ENCODE measurements at regions of chr12 and their contacts with region 1.

Region 1: GRCh38 chr12:78146365-78146772 is 315.7 kb downstream of the NAV3 start:
- DNase-seq: no peak
- ATAC-seq: peak; percentile 69
- H3K4me3 ChIP-seq: no peak overlapping the region
- H3K27ac ChIP-seq: no peak overlapping the region
- H3K4me1 ChIP-seq: no peaks in the 10 kb centered on the region
- H3K27me3 ChIP-seq: no peaks in the 10 kb centered on the region
- CTCF ChIP-seq: peak; percentile 56 to 63 (median 58)
- EP300 ChIP-seq: no peak
- POLR2A ChIP-seq: no peak
- RAD21 ChIP-seq: peak; percentile 66

Region 2: DNA sequence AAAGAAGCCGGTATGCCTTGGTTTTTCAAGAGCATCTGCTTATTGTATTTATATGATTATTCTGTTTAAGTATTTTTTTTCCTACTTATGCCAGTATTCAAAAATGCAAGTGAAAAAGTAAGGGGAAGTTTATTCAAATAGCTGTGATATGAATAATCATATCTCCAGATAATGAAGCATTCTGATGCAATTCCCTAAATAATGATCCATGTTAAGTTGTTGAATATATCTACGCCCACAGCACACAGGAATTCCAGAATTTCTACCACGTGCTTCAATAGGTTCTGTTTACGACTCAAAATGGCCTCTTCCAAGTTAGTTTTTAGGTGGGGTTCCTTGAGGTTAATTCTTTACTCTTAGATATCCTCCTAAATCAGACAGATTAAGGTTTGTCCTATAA is 107.4 kb before region 1 on chr12:
- CTCF ChIA-PET with region 1: no interaction called
- POLR2A ChIA-PET with region 1: no interaction called
- RAD21 ChIA-PET with region 1: no interaction called
- SMC1A ChIA-PET with region 1: no interaction called
- in situ Hi-C with region 1: no loop called
- intact Hi-C with region 1: no loop called
- DNase-seq: no peak
- ATAC-seq: no peak
- H3K4me3 ChIP-seq: no peak overlapping the region
- H3K27ac ChIP-seq: no peak overlapping the region
- H3K4me1 ChIP-seq: no peaks in the 10 kb centered on the region
- H3K27me3 ChIP-seq: no peaks in the 10 kb centered on the region; a peak in 1 of 4 replicates
- CTCF ChIP-seq: no peak
- EP300 ChIP-seq: no peak
- POLR2A ChIP-seq: no peak
- RAD21 ChIP-seq: no peak

Region 3: GRCh38 chr12:78050790-78051189 is 95.6 kb before region 1 on chr12:
- CTCF ChIA-PET with region 1: no interaction called
- POLR2A ChIA-PET with region 1: no interaction called
- RAD21 ChIA-PET with region 1: no interaction called
- SMC1A ChIA-PET with region 1: no interaction called
- in situ Hi-C with region 1: no loop called
- intact Hi-C with region 1: no loop called
- DNase-seq: no peak
- ATAC-seq: no peak
- H3K4me3 ChIP-seq: no peak overlapping the region
- H3K27ac ChIP-seq: no peak overlapping the region
- H3K4me1 ChIP-seq: no peaks in the 10 kb centered on the region
- H3K27me3 ChIP-seq: no peaks in the 10 kb centered on the region
- CTCF ChIP-seq: no peak
- EP300 ChIP-seq: no peak
- POLR2A ChIP-seq: no peak
- RAD21 ChIP-seq: no peak

Region 4: GRCh38 chr12:78101946-78102635 is 44.3 kb before region 1 on chr12:
- CTCF ChIA-PET with region 1: no interaction called
- POLR2A ChIA-PET with region 1: no interaction called
- RAD21 ChIA-PET with region 1: no interaction called
- SMC1A ChIA-PET with region 1: no interaction called
- in situ Hi-C with region 1: no loop called
- intact Hi-C with region 1: no loop called
- DNase-seq: no peak
- ATAC-seq: peak; percentile 65
- H3K4me3 ChIP-seq: no peak overlapping the region
- H3K27ac ChIP-seq: no peak overlapping the region
- H3K4me1 ChIP-seq: no peaks in the 10 kb centered on the region
- H3K27me3 ChIP-seq: no peaks in the 10 kb centered on the region
- CTCF ChIP-seq: 0 out of 6 replicates have a peak, but pooled peaks of 1 of the 3 experiments have one; percentile 5
- EP300 ChIP-seq: no peak
- POLR2A ChIP-seq: no peak
- RAD21 ChIP-seq: no peak

Region 5: DNA sequence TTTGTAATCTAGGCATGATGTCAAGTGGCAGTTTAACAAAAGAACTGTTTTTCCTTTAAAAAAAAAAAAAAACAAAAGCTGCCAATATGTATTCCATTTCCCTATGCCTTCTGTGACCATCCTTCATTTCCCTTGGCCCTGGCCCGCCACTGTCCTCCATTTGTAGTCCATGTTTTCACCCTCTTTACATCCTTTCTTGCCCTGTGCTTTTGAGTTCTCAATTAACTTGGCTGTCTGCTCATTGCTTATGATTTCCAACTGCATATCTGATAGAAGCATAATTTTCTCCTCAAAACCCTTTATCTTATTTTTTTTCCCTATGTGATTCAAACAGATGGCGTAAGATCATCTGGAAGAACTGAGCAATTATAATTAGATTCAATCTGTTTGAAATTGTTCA is 18.2 kb before region 1 on chr12:
- CTCF ChIA-PET with region 1: interaction called, 11 read pairs
- POLR2A ChIA-PET with region 1: no interaction called
- RAD21 ChIA-PET with region 1: no interaction called
- SMC1A ChIA-PET with region 1: interaction called, 6 read pairs
- in situ Hi-C with region 1: no loop called
- intact Hi-C with region 1: no loop called
- DNase-seq: no peak
- ATAC-seq: no peak
- H3K4me3 ChIP-seq: no peak overlapping the region
- H3K27ac ChIP-seq: no peak overlapping the region
- H3K4me1 ChIP-seq: no peaks in the 10 kb centered on the region
- H3K27me3 ChIP-seq: no peaks in the 10 kb centered on the region
- CTCF ChIP-seq: no peak
- EP300 ChIP-seq: no peak
- POLR2A ChIP-seq: no peak
- RAD21 ChIP-seq: no peak

Region 6: GRCh38 chr12:78157199-78157598 is 10.8 kb after region 1 on chr12:
- CTCF ChIA-PET with region 1: interaction called, 16 read pairs
- POLR2A ChIA-PET with region 1: no interaction called
- RAD21 ChIA-PET with region 1: interaction called, 3 read pairs
- SMC1A ChIA-PET with region 1: no interaction called
- in situ Hi-C with region 1: no loop called
- intact Hi-C with region 1: no loop called
- DNase-seq: no peak
- ATAC-seq: no peak
- H3K4me3 ChIP-seq: no peak overlapping the region
- H3K27ac ChIP-seq: no peak overlapping the region
- H3K4me1 ChIP-seq: no peaks in the 10 kb centered on the region
- H3K27me3 ChIP-seq: no peaks in the 10 kb centered on the region
- CTCF ChIP-seq: no peak
- EP300 ChIP-seq: no peak
- POLR2A ChIP-seq: no peak
- RAD21 ChIP-seq: no peak

Region 7: DNA sequence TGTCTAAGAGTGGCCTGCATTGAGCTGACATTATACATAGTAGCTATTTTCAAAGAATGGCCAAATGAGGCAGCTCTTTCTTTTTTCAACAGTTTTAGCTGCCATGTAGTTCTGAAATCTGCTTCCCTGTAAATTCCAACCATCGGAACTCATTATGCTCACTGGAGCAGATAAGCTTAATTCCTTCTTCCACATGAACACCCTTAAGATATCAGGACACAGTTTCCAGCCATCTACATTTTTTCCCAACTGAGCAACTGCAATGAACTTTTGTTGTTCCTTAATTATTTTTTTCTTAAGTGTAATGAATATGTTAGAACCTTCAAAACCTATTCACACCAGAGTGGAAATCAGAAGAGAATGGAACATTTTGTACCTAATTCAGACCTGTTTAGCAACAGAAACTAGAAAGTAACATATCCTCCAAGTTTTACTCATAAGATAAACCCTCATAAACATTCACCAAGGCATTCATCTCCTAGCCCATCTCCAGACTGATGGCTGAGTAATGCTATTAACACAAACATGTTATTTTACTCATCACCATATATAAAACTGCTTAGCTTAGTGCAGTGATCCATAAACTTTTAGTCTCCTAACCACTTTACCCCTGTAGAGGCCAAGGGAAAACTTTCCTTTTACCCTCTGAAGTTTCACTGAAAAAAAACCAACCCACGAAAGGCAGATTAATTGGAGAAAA is 422.1 kb after region 1 on chr12:
- CTCF ChIA-PET with region 1: no interaction called
- POLR2A ChIA-PET with region 1: no interaction called
- RAD21 ChIA-PET with region 1: no interaction called
- SMC1A ChIA-PET with region 1: no interaction called
- in situ Hi-C with region 1: no loop called
- intact Hi-C with region 1: no loop called
- DNase-seq: no peak
- ATAC-seq: no peak
- H3K4me3 ChIP-seq: no peak overlapping the region
- H3K27ac ChIP-seq: no peak overlapping the region
- H3K4me1 ChIP-seq: no peaks in the 10 kb centered on the region
- H3K27me3 ChIP-seq: no peaks in the 10 kb centered on the region
- CTCF ChIP-seq: no peak
- EP300 ChIP-seq: no peak
- POLR2A ChIP-seq: no peak
- RAD21 ChIP-seq: no peak

Region 8: GRCh38 chr12:78584695-78585531 is 438.5 kb after region 1 on chr12:
- CTCF ChIA-PET with region 1: interaction called, 3 read pairs
- POLR2A ChIA-PET with region 1: no interaction called
- RAD21 ChIA-PET with region 1: no interaction called
- SMC1A ChIA-PET with region 1: no interaction called
- in situ Hi-C with region 1: no loop called
- intact Hi-C with region 1: loop called (anchors 10 kb)
- DNase-seq: no peak
- ATAC-seq: peak; percentile 61
- H3K4me3 ChIP-seq: no peak overlapping the region
- H3K27ac ChIP-seq: no peak overlapping the region
- H3K4me1 ChIP-seq: no peaks in the 10 kb centered on the region
- H3K27me3 ChIP-seq: no peaks in the 10 kb centered on the region
- CTCF ChIP-seq: peak; percentile 18 to 31 (median 20); a peak in 3 of 6 replicates
- EP300 ChIP-seq: no peak
- POLR2A ChIP-seq: no peak
- RAD21 ChIP-seq: peak; percentile 47

Region 9: DNA sequence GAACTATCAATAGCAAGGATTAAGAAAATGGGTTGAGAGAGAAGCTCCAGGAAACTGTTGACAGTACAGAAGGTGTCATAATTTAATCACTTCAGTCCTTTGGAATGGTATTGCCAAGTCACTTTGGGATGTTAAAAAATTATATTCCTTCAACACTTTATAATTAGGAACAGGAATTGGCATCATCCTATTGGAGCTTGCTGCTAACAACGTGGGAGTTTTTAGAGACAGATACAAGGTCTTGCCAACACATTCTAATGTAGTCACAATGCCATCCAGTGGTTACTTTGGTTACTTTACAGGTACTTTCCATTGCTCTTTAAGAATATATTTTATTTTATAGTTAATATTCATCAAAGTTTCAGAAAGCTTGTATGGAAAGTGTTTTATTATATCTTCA is 1028.3 kb after region 1 on chr12:
- CTCF ChIA-PET with region 1: interaction called, 10 read pairs
- POLR2A ChIA-PET with region 1: no interaction called
- RAD21 ChIA-PET with region 1: interaction called, 4 read pairs
- SMC1A ChIA-PET with region 1: interaction called, 3 read pairs
- in situ Hi-C with region 1: no loop called
- intact Hi-C with region 1: no loop called
- DNase-seq: no peak
- ATAC-seq: peak; percentile 86
- H3K4me3 ChIP-seq: no peak overlapping the region
- H3K27ac ChIP-seq: no peak overlapping the region
- H3K4me1 ChIP-seq: no peaks in the 10 kb centered on the region
- H3K27me3 ChIP-seq: no peaks in the 10 kb centered on the region
- CTCF ChIP-seq: peak in 2 of 3 experiments; percentile 14 to 51; a peak in 1 of 6 replicates
- EP300 ChIP-seq: no peak
- POLR2A ChIP-seq: no peak
- RAD21 ChIP-seq: peak; percentile 56

Region 10: DNA sequence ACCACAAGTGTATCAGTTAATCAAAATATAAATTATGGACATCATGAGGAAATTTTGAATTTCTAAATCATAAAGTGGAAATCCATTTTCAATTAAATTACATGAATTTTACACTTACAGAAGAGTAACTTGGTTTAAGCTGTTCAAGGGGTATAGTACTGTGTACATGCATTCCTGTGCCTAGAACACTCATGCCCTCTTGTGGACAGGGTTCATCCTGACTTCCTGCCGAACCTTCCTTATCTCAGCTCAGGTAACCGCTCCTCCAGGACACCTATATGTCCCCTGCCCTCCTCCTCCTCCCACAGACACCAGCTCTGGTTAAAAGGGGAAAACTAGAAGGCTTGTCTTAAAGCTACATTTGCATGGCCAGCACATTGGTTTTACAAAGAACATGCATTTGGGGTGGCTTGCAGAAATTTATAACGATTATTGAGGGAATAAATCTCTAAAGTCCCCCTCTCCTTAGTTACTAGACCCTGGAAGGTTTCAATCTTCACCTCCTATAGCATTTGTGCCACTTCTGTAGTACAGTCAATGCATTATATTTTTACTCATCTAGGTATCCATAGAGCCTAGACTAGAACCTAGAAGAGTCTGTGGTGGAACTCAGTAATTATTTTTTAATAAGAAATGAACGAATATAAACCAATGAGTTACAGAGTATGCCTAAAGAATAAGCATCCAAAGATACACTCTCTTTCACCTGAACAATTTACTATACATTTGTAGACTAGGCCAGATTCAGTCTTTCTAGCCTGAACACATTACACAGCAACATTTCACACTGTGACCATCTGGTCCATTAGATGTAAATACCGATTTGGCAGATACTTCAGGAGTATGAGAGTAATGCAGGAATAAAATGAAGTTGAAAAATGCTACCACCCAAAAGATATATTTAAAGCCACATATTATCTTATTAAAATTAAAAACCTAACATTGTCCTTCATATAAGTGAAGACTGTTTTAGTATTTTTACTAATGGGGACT is 1198.8 kb after region 1 on chr12:
- CTCF ChIA-PET with region 1: interaction called, 4 read pairs
- POLR2A ChIA-PET with region 1: no interaction called
- RAD21 ChIA-PET with region 1: no interaction called
- SMC1A ChIA-PET with region 1: no interaction called
- in situ Hi-C with region 1: no loop called
- intact Hi-C with region 1: loop called (anchors 5 kb)
- DNase-seq: peak; percentile 2
- ATAC-seq: peak; percentile 96
- H3K4me3 ChIP-seq: no peak overlapping the region
- H3K27ac ChIP-seq: no peak overlapping the region
- H3K4me1 ChIP-seq: no peaks in the 10 kb centered on the region
- H3K27me3 ChIP-seq: no peaks in the 10 kb centered on the region
- CTCF ChIP-seq: peak; percentile 51 to 72 (median 64)
- EP300 ChIP-seq: no peak
- POLR2A ChIP-seq: no peak
- RAD21 ChIP-seq: peak; percentile 64